GM18951 (cell line): ENCODE measurements at regions of chr1 and their contacts with region 1.

Region 1: GRCh38 chr1:159214149-159214760 is 9.6 kb downstream of the ACKR1 start:
- POLR2A ChIP-seq: no peak

Region 2: GRCh38 chr1:159009704-159010361 is 204.4 kb before region 1 on chr1 and contains the start of gene IFI16:
- in situ Hi-C with region 1: no loop called
- POLR2A ChIP-seq: peak; percentile 62

Region 3: DNA sequence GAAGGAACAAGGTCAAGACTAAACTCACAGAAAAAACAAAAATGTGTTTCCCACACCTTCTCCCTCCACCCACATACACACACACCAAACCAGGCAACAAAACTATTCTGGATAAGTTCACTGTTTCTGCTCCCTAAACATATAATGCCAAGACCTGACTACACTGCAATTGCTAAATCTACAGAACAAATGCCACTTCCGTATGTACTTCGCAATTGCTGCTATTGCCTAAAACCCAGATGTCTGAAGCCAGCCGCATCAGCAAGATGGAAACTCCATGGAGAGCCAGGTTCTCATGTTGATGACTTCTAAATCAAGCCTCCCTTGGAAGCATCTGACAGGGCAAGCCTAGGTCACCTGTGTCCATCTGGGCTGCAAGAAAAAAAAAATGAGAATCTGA is 129.4 kb before region 1 on chr1:
- in situ Hi-C with region 1: no loop called
- POLR2A ChIP-seq: no peak

Region 4: DNA sequence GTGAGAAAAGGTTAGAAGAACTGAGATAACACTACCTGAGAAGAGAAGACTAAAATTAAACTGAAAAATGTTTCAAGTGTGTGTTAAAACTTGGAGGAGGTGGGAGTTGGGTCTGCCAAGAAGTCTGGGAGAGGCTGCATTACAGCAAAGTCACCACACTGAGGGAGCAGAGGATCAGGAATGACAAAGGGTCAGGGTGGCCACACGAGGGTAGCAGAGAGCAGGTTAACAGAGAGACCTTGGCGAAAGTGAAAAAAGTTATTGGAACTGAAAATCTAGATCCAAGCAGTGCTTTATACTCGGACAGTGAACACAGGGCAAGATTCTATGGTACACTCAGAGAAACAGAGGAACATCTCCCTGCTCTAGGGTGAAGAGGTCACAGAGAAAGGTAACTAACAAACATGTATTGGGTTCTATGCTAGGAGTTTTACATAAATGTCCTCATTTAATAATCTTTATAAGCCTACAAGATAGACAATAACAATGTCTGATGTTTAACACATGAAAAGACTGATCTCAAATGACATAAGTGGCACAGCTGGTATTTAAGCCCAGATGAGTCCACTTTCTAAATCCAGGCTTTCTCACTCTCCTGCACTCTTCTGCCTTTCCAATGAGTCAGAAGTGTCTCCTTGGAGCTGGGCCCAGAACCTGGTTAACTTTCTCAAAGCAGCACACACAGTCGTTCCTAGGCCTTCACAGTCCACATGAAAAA is 53.1 kb before region 1 on chr1:
- in situ Hi-C with region 1: loop called (anchors 5 kb)
- POLR2A ChIP-seq: no peak

Region 5: GRCh38 chr1:159746666-159747065 is 532.4 kb after region 1 on chr1:
- in situ Hi-C with region 1: no loop called
- POLR2A ChIP-seq: no peak